GM12878 (cell line): ENCODE measurements at regions of chr12 and their contacts with region 1.

Region 1: GRCh38 chr12:124453419-124454351 is 113.7 kb downstream of the NCOR2 start:
- DNase-seq: peak; percentile 72
- ATAC-seq: peak; percentile 82
- H3K4me3 ChIP-seq: peak overlapping the region; percentile 53
- H3K27ac ChIP-seq: peak overlapping the region; percentile 95
- H3K4me1 ChIP-seq: peaks cover 55% of the 10 kb centered on the region
- H3K27me3 ChIP-seq: no peaks in the 10 kb centered on the region
- CTCF ChIP-seq: peak in 2 of 3 experiments; percentile 16 to 19; a peak in 1 of 6 replicates
- EP300 ChIP-seq: peak in 1 of 2 experiments; percentile 62; a peak in 1 of 4 replicates
- POLR2A ChIP-seq: peak; percentile 78
- RAD21 ChIP-seq: 0 out of 2 replicates have a peak, but pooled peaks have one; percentile 17

Region 2: GRCh38 chr12:124354400-124354799 is 99.3 kb before region 1 on chr12:
- CTCF ChIA-PET with region 1: no interaction called
- POLR2A ChIA-PET with region 1: no interaction called
- RAD21 ChIA-PET with region 1: no interaction called
- SMC1A ChIA-PET with region 1: no interaction called
- in situ Hi-C with region 1: no loop called
- intact Hi-C with region 1: no loop called
- DNase-seq: no peak
- ATAC-seq: no peak
- H3K4me3 ChIP-seq: no peak overlapping the region
- H3K27ac ChIP-seq: no peak overlapping the region
- H3K4me1 ChIP-seq: no peaks in the 10 kb centered on the region
- H3K27me3 ChIP-seq: no peaks in the 10 kb centered on the region
- CTCF ChIP-seq: no peak
- EP300 ChIP-seq: no peak
- POLR2A ChIP-seq: no peak
- RAD21 ChIP-seq: no peak

Region 3: GRCh38 chr12:124388679-124389536 is 64.8 kb before region 1 on chr12:
- CTCF ChIA-PET with region 1: no interaction called
- POLR2A ChIA-PET with region 1: no interaction called
- RAD21 ChIA-PET with region 1: interaction called, 3 read pairs
- SMC1A ChIA-PET with region 1: no interaction called
- in situ Hi-C with region 1: no loop called
- intact Hi-C with region 1: loop called (anchors 5 kb)
- DNase-seq: no peak
- ATAC-seq: peak; percentile 48
- H3K4me3 ChIP-seq: no peak overlapping the region
- H3K27ac ChIP-seq: no peak overlapping the region
- H3K4me1 ChIP-seq: peaks cover 40% of the 10 kb centered on the region
- H3K27me3 ChIP-seq: no peaks in the 10 kb centered on the region
- CTCF ChIP-seq: no peak
- EP300 ChIP-seq: no peak
- POLR2A ChIP-seq: no peak; the same call in 1 of the 2 replicates
- RAD21 ChIP-seq: no peak

Region 4: GRCh38 chr12:124404162-124404784 is 49.4 kb before region 1 on chr12:
- CTCF ChIA-PET with region 1: no interaction called
- POLR2A ChIA-PET with region 1: no interaction called
- RAD21 ChIA-PET with region 1: no interaction called
- SMC1A ChIA-PET with region 1: no interaction called
- in situ Hi-C with region 1: no loop called
- intact Hi-C with region 1: no loop called
- DNase-seq: no peak
- ATAC-seq: no peak
- H3K4me3 ChIP-seq: no peak overlapping the region
- H3K27ac ChIP-seq: no peak overlapping the region
- H3K4me1 ChIP-seq: no peaks in the 10 kb centered on the region
- H3K27me3 ChIP-seq: no peaks in the 10 kb centered on the region
- CTCF ChIP-seq: no peak
- EP300 ChIP-seq: no peak
- POLR2A ChIP-seq: no peak
- RAD21 ChIP-seq: no peak

Region 5: DNA sequence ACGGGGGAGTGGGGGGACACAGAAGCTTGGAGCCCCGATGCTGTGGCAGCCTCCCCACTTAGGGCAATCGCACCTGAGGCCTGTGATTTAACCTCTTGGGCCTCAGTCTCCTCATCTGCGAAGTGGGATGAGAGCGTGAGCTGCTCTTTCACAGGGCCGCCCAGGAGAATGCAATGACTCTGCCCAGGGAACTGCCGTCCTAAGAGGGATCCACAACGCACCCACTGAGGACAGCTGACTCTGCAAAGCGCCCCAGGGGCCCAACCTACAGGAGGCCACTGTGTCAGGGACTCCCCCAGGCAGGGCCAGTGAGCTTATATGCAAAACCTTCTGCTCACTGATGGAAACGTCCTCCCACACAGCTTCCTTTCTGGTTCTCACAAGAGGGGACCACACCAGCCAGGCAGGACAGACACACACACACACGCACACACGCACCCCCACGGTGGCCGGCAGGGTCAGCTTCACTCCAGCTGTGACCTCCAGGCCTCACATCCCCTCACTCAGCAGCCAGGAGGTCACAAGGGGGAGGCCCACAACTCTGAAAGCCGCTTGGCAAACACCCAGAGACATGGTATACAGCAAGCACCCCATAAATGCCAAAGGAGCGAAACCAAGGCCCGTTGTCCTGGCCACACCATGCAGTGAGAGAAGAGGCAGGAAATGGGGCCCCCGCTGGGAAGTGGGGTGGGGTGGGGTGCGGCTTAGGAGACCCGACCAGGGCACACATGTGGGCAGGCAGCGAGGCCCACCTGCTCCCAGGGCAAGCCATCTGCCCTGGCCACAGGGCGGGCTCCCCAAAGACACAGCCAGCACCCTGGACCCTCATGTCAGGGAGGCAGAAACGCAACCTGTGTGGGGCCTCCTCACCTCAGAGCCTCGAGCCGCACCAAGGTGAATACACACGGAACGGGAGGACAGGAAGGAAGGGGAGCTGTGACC is 40.4 kb after region 1 on chr12:
- CTCF ChIA-PET with region 1: interaction called, 7 read pairs
- POLR2A ChIA-PET with region 1: interaction called, 5 read pairs
- RAD21 ChIA-PET with region 1: interaction called, 12 read pairs
- SMC1A ChIA-PET with region 1: interaction called, 18 read pairs
- in situ Hi-C with region 1: no loop called
- intact Hi-C with region 1: loop called (anchors 5 kb)
- DNase-seq: peak; percentile 86
- ATAC-seq: peak; percentile 96
- H3K4me3 ChIP-seq: peak overlapping the region; percentile 38; the same call in 1 of the 2 replicates
- H3K27ac ChIP-seq: peak overlapping the region; percentile 91
- H3K4me1 ChIP-seq: peaks cover 62% of the 10 kb centered on the region
- H3K27me3 ChIP-seq: no peaks in the 10 kb centered on the region
- CTCF ChIP-seq: no peak
- EP300 ChIP-seq: peak; percentile 63 to 84; a peak in 3 of 4 replicates
- POLR2A ChIP-seq: peak; percentile 91
- RAD21 ChIP-seq: 0 out of 2 replicates have a peak, but pooled peaks have one; percentile 5

Region 6: GRCh38 chr12:124567661-124568373 is 114.1 kb after region 1 on chr12:
- CTCF ChIA-PET with region 1: interaction called, 4 read pairs
- POLR2A ChIA-PET with region 1: no interaction called
- RAD21 ChIA-PET with region 1: interaction called, 4 read pairs
- SMC1A ChIA-PET with region 1: interaction called, 4 read pairs
- in situ Hi-C with region 1: no loop called
- intact Hi-C with region 1: loop called (anchors 5 kb)
- DNase-seq: no peak
- ATAC-seq: peak; percentile 70
- H3K4me3 ChIP-seq: peak overlapping the region; percentile 95
- H3K27ac ChIP-seq: peak overlapping the region; percentile 82
- H3K4me1 ChIP-seq: peaks cover 25% of the 10 kb centered on the region
- H3K27me3 ChIP-seq: no peaks in the 10 kb centered on the region
- CTCF ChIP-seq: peak in 1 of 3 experiments; percentile 14; a peak in 2 of 6 replicates
- EP300 ChIP-seq: no peak
- POLR2A ChIP-seq: peak; percentile 57
- RAD21 ChIP-seq: no peak

Region 7: DNA sequence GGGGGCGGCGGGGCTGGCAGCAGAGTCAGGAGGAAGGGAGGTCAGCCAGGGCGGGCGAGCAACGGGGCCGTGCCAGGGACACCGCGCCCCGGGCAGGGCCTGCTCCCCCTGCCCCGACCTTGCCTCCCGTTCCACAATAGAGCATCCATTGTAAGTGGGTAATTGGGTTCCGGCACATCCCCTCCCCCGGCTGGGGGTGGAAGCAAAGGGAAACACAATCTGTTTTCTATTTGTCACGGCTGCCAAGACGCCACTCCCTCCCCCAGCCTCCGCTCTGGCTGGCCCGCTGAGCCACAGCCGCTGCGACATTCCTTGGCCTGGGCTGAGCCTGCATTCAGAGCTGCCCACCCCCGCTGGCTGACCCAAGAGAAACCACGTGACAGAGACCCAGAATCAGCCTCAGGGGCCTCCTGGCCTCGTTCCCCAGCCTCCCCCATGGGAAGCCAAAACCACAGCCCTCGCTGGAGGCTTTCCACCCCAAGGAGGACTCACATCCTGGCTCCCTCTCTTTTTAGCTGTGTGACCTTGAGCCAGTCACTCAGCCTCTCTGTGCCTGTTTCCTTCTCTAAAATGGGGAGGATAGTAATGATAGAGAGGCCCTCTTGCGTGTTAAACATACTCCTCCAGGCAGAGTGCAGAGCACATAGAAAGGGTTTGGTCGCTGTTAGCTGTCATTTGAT is 292.3 kb after region 1 on chr12:
- CTCF ChIA-PET with region 1: no interaction called
- POLR2A ChIA-PET with region 1: no interaction called
- RAD21 ChIA-PET with region 1: no interaction called
- SMC1A ChIA-PET with region 1: no interaction called
- in situ Hi-C with region 1: no loop called
- intact Hi-C with region 1: loop called (anchors 5 kb)
- DNase-seq: no peak
- ATAC-seq: peak; percentile 59
- H3K4me3 ChIP-seq: no peak overlapping the region
- H3K27ac ChIP-seq: no peak overlapping the region
- H3K4me1 ChIP-seq: peaks cover 6% of the 10 kb centered on the region
- H3K27me3 ChIP-seq: no peaks in the 10 kb centered on the region
- CTCF ChIP-seq: no peak
- EP300 ChIP-seq: no peak
- POLR2A ChIP-seq: no peak
- RAD21 ChIP-seq: no peak